Caco-2 (cell line): ENCODE measurements at regions of chr4 and their contacts with region 1.

Region 1: DNA sequence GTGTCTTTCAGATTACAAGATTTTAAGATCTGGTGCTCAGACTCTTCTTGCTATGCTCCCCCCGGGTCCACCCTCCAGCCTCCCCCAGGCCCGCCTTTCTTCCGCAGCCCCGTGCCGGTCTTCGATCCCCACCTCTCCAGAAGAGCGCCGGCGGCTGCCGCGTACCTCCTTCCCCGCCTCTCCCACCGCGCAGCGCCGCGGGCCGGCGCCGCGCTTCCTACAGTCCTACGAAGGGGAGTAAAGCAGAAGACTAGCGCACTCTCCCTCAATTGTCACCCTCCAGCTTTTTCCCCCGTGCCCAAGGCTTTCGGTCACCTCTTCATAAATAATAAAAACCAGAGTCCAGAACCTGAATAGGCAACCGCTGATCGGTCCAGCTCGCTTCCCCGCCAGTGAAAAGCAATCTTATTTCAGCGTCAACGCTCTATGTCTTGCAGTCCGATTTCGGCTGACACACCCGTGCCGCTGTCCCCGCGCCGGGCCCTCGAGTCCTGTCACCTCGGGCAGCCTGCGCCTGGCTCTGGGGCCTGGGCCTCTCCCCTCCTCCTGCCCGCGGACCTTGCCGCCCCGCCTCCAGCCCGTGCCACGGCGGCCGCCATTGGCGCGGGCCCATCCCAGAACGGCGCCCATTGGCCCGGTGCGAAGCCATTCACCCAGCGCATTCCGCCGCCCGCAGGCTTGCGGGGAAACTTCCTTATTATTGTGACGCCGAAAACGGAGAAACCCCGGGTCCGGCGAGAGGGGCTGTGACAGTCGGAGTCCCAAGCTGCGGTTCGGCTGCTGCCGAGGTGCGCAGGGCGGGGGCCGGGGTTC is at the start of gene HERC3:
- DNase-seq: peak; percentile 86 to 93
- H3K4me3 ChIP-seq: peak within 1 kb of the TSS; percentile 86
- H3K4me3 Mint-ChIP-seq: peak within 1 kb of the TSS; percentile 96
- H3K27ac Mint-ChIP-seq: peak within 1 kb of the TSS; percentile 71
- H3K4me1 ChIP-seq: peaks cover 13% of the 10 kb centered on the region
- H3K4me1 Mint-ChIP-seq: peaks cover 6% of the 10 kb centered on the region
- H3K27me3 ChIP-seq: no peaks in the 10 kb centered on the region
- H3K27me3 Mint-ChIP-seq: no peaks in the 10 kb centered on the region
- CTCF ChIP-seq: no peak
- total RNA-seq, gene HERC3: 9.2 and 10.5 TPM in 2 replicates

Region 2: DNA sequence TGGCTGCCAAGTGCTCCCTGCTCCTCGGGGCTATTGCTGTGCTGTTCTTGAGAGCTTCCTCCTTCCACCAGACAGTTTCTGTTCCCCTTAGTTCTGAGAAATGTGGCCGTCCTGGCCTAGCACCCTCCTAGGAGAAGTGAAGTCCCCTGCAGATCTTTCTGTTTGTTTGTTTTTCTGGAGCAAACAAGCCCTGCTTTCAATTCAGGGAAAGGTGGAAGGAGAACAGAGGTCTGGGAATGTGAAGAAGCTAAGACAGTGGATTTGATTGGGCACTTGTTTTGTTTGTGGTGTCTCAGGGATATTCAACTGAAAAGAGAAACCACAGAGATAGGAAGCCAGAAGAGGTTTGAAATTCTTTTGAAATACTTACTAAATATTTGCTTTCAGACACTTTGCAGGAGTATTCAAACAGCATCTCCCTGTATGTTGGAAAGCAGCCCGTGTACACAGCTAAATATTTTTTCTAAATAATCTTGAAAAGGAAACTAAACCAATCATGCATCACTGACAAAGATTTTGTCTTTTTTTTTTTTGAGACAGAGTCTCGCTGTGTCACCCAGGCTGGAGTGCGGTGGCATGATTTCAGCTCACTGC is 271.1 kb before region 1 on chr4:
- CTCF ChIA-PET with region 1: no interaction called
- POLR2A ChIA-PET with region 1: no interaction called
- intact Hi-C with region 1: no loop called
- DNase-seq: peak in 1 of 2 experiments; percentile 31
- H3K4me3 ChIP-seq: no peak overlapping the region
- H3K4me3 Mint-ChIP-seq: peak overlapping the region; percentile 23
- H3K27ac Mint-ChIP-seq: peak overlapping the region; percentile 30
- H3K4me1 ChIP-seq: peaks cover 36% of the 10 kb centered on the region
- H3K4me1 Mint-ChIP-seq: peaks cover 19% of the 10 kb centered on the region
- H3K27me3 ChIP-seq: no peaks in the 10 kb centered on the region
- H3K27me3 Mint-ChIP-seq: no peaks in the 10 kb centered on the region
- CTCF ChIP-seq: no peak

Region 3: DNA sequence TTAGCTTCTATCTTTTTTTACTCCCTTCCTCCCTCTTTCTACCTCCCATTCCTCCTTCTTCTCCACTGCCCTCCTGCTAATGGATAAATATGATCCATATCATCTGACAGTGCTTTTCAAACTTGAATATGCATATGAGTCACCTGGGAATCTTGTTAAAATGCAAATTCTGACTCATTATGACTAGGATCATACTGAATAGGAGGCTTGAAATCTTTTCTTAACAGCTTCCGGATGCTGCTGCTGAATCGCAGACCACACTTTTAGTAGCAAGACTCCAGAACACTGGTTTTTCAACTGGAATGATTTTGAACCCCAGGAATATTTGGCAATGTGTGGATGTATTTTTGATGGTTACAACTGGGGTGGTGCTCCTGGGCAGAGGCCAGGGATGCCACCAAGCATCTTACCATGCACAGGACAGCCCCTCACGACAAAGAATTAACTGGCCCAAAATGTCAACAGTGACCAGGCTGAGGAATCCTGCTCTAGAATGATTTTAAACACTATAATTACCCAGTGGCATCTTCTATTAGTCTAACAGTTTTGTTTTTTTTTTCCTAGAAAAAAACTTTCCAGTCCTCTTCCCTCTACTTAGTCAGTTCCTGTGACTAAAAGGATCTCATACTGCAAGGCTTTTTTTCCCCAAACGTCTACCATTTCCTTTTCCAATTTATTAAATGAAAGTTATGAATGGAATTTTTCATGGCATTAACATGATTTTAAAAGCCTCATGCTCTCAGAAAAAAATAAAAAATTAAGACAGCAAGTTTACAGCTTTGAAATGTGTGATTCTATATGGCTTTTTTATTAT is 57.8 kb before region 1 on chr4:
- CTCF ChIA-PET with region 1: interaction called, 5 read pairs
- POLR2A ChIA-PET with region 1: no interaction called
- intact Hi-C with region 1: loop called (anchors 5 kb)
- DNase-seq: no peak
- H3K4me3 ChIP-seq: no peak overlapping the region
- H3K4me3 Mint-ChIP-seq: no peak overlapping the region
- H3K27ac Mint-ChIP-seq: no peak overlapping the region
- H3K4me1 ChIP-seq: no peaks in the 10 kb centered on the region
- H3K4me1 Mint-ChIP-seq: no peaks in the 10 kb centered on the region
- H3K27me3 ChIP-seq: no peaks in the 10 kb centered on the region
- H3K27me3 Mint-ChIP-seq: no peaks in the 10 kb centered on the region
- CTCF ChIP-seq: no peak

Region 4: DNA sequence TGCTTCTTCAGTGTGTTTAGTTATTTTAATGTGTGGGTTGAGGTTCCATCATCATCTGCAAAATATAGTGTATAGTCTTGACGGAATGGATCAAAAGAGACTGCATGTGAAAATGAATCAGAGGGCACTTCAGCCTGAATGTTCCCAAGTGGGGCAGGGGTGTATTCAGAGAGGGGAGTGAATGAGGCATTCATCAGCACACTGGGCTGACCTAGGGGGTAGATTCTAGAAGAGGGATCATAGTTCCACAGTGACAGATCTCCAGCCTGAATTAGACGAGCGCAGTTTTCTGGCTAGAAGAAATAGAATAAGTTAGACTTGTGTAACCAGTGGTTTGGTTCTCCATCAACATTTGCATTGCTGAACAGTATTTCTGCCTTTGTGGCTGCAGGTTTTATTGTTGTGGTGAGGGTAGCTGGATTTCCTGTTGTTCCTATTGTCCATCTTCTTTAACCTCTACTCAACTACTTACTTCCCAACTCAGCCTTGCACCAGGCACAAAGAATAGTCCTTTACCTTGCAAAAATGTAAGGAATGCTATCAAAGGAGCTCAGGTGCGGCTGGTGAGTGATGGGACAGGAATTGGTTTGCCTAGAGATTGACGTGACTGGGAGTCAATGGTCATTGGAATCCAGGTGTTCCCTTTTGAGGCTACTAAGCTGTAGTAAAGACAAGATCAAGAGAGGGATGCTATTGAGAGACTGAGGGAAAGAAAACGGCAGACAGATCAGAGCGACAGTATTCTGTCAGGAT is 54.7 kb after region 1 on chr4:
- CTCF ChIA-PET with region 1: interaction called, 3 read pairs
- POLR2A ChIA-PET with region 1: no interaction called
- intact Hi-C with region 1: loop called (anchors 1 kb)
- DNase-seq: peak; percentile 56 to 63
- H3K4me3 ChIP-seq: no peak overlapping the region
- H3K4me3 Mint-ChIP-seq: peak overlapping the region; percentile 6
- H3K27ac Mint-ChIP-seq: peak overlapping the region; percentile 42
- H3K4me1 ChIP-seq: peaks cover 26% of the 10 kb centered on the region
- H3K4me1 Mint-ChIP-seq: peaks cover 26% of the 10 kb centered on the region
- H3K27me3 ChIP-seq: no peaks in the 10 kb centered on the region
- H3K27me3 Mint-ChIP-seq: no peaks in the 10 kb centered on the region
- CTCF ChIP-seq: no peak